H1 (cell line): ENCODE measurements at regions of chr15 and their contacts with region 1.

Region 1: GRCh38 chr15:51281368-51281967 is 56.9 kb downstream of the CYP19A1 start:
- DNase-seq: peak in 1 of 2 experiments; percentile 79
- H3K4me3 ChIP-seq: no peak overlapping the region
- H3K27ac ChIP-seq: no peak overlapping the region
- H3K4me1 ChIP-seq: no peaks in the 10 kb centered on the region
- H3K27me3 ChIP-seq: no peaks in the 10 kb centered on the region
- CTCF ChIP-seq: peak; percentile 80 to 83 (median 81)
- EP300 ChIP-seq: no peak
- POLR2A ChIP-seq: no peak
- RAD21 ChIP-seq: peak; percentile 80 to 86

Region 2: DNA sequence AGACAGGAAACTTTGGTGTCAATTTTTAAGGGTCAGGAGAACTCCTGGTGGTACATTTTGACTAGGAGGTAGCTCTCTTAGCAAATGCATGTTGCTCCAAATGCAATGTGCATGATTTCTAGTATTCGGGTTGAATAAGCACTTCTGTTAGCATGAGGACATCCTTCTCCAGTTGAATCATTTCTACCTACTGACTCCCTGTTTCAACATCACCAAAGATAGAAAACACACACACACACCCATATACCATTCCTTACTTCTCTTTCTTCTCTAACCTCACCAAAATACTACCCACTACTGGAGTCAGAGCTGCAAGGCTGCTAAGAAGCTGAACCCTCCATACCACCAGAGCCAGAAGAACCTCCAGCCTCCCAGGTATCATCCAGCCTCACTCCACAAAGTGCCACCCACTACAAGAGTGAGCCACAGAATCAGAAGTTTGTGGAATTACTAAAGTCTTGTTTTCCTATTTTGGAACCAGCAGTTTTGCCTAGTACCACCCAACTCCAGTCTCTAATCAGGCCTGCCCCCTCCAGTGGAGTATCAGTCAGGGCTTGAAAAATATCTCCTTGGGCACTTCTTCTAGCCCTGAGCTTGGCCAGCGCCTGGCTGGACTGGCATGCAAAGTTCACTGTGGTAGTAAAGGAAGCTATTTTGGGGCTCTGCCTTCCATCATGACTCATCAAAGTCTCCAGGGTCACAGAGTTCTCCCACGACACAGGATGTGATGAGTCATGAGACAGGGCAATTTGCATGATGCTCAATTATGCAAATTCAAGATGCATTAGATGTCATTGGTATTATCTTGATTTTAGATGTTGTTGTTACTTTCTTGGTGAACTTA is 53.3 kb before region 1 on chr15:
- CTCF ChIA-PET with region 1: interaction called, 22 read pairs
- POLR2A ChIA-PET with region 1: no interaction called
- DNase-seq: peak in 1 of 2 experiments; percentile 7
- H3K4me3 ChIP-seq: no peak overlapping the region
- H3K27ac ChIP-seq: no peak overlapping the region
- H3K4me1 ChIP-seq: peaks cover 0 to 4% (median 1%) of the 10 kb centered on the region in 4 experiments; a peak in 2 of 7 replicates
- H3K27me3 ChIP-seq: no peaks in the 10 kb centered on the region
- CTCF ChIP-seq: no peak
- EP300 ChIP-seq: no peak
- POLR2A ChIP-seq: no peak
- RAD21 ChIP-seq: no peak

Region 3: GRCh38 chr15:51255533-51255932 is 25.9 kb before region 1 on chr15:
- CTCF ChIA-PET with region 1: interaction called, 12 read pairs
- POLR2A ChIA-PET with region 1: no interaction called
- DNase-seq: no peak
- H3K4me3 ChIP-seq: no peak overlapping the region
- H3K27ac ChIP-seq: no peak overlapping the region
- H3K4me1 ChIP-seq: no peaks in the 10 kb centered on the region
- H3K27me3 ChIP-seq: no peaks in the 10 kb centered on the region
- CTCF ChIP-seq: no peak
- EP300 ChIP-seq: no peak
- POLR2A ChIP-seq: no peak
- RAD21 ChIP-seq: no peak

Region 4: DNA sequence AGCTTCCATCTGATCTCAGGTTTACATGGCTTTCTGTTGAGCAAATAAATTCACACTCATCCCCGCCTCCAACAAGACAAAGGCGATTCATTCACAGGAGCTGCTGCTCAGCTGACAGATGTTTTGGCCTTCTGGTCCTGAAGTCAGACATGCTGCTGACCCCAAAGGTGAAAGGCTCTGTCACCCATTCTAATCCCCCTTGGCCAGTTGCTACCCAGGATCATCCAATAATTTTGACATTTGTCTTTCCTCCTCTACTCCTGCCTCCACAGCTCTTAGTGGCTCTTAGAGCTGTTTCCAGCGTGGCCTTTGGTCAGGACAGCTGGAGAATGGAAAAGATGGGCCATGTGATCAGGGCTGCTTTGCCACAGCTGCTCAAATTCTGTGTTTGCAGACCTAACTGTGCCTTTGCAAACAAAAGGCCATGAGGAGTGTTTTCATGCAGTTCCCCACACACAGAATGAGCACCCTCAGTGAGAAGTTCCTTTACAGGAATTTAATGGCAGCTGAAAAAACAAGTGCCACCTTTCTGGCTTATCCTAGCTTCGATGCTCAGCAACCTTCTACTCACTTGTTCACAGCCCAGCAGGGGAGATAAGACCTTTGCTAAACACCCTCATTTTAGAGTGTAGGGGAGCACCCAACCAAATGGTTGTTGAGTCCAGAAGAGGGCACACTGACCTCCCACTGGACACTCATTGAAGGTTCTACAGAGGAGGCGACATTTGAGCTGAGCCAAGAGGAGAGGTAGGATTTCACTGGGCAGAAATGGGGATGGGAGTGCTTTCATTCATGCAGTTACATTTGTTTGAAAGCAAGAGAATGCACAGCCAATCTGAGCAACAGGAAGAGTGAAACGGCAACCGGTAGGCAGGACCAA is 18.0 kb after region 1 on chr15:
- CTCF ChIA-PET with region 1: interaction called, 20 read pairs
- POLR2A ChIA-PET with region 1: interaction called, 4 read pairs
- DNase-seq: no peak
- H3K4me3 ChIP-seq: no peak overlapping the region
- H3K27ac ChIP-seq: no peak overlapping the region
- H3K4me1 ChIP-seq: no peaks in the 10 kb centered on the region
- H3K27me3 ChIP-seq: no peaks in the 10 kb centered on the region; a peak in 1 of 7 replicates
- CTCF ChIP-seq: no peak
- EP300 ChIP-seq: no peak
- POLR2A ChIP-seq: no peak
- RAD21 ChIP-seq: no peak

Region 5: DNA sequence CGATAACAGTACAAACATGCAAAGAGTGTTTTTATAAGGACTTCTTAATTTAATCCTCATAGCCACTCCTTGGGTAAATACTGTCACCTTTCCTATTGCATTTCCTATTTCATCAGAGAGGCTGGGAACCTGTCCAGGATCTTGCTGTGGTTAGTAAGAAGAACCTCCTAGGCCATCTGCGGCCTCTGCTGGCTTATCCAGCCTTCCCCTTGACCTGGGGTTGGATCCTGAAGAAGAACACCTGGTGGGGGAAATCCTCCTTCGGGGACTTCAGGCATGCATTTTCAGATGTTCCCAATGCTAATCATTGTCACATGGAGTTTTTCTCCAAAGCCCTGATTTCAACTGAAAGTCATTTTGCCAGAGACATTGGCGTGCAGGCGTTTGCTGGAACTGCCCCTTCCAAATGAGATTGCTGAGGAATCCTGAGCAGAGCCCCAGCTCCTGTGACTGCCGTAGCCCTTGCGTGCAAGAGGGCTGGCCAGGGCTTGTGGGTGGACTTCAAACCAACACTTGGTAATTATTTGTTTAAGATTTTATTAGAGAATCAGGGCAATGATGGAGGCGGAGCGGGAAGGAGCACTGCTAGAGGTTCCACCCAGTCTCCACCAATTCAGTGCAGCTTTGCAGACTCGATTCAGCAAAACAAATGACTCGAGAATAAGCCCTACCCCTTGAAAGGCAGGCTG is 85.6 kb after region 1 on chr15:
- CTCF ChIA-PET with region 1: interaction called, 23 read pairs
- POLR2A ChIA-PET with region 1: no interaction called
- DNase-seq: no peak
- H3K4me3 ChIP-seq: no peak overlapping the region
- H3K27ac ChIP-seq: no peak overlapping the region
- H3K4me1 ChIP-seq: peaks cover 0 to 2% (median 0%) of the 10 kb centered on the region in 4 experiments; a peak in 1 of 7 replicates
- H3K27me3 ChIP-seq: no peaks in the 10 kb centered on the region; a peak in 1 of 7 replicates
- CTCF ChIP-seq: no peak
- EP300 ChIP-seq: no peak
- POLR2A ChIP-seq: no peak
- RAD21 ChIP-seq: no peak

Region 6: GRCh38 chr15:51401872-51402517 is 120.5 kb after region 1 on chr15:
- CTCF ChIA-PET with region 1: interaction called, 94 read pairs
- POLR2A ChIA-PET with region 1: no interaction called
- DNase-seq: peak in 1 of 2 experiments; percentile 86
- H3K4me3 ChIP-seq: no peak overlapping the region
- H3K27ac ChIP-seq: no peak overlapping the region
- H3K4me1 ChIP-seq: peaks cover 0 to 8% (median 0%) of the 10 kb centered on the region in 4 experiments; a peak in 2 of 7 replicates
- H3K27me3 ChIP-seq: no peaks in the 10 kb centered on the region
- CTCF ChIP-seq: peak; percentile 83 to 87 (median 84)
- EP300 ChIP-seq: no peak
- POLR2A ChIP-seq: no peak
- RAD21 ChIP-seq: peak; percentile 75 to 80

Region 7: GRCh38 chr15:51829360-51830275 is 548.1 kb after region 1 on chr15 and contains the start of gene TMOD3:
- CTCF ChIA-PET with region 1: no interaction called
- POLR2A ChIA-PET with region 1: no interaction called
- DNase-seq: peak; percentile 79 to 98
- H3K4me3 ChIP-seq: peak within 1 kb of the TSS; percentile 74 to 92 (median 88)
- H3K27ac ChIP-seq: peak within 1 kb of the TSS; percentile 32; the same call in 1 of the 2 replicates
- H3K4me1 ChIP-seq: no peaks in the 10 kb centered on the region
- H3K27me3 ChIP-seq: no peaks in the 10 kb centered on the region
- CTCF ChIP-seq: peak in 1 of 3 experiments; percentile 4; a peak in 1 of 4 replicates
- EP300 ChIP-seq: 0 out of 3 replicates have a peak, but pooled peaks of 1 of the 2 experiments have one; percentile 16
- POLR2A ChIP-seq: peak in 1 of 2 experiments; percentile 91; a peak in 2 of 3 replicates
- RAD21 ChIP-seq: no peak
- total RNA-seq, gene TMOD3: 29.0 and 30.3 TPM in 2 replicates